Activated CD4-positive, alpha-beta T cell treated with anti-CD3 and anti-CD28 coated beads, Interleukin-2, amount 10 ng/mL, durations not matched to agents 24 days and 14 days (primary cell): ENCODE measurements at regions of chr7 and their contacts with region 1.

Region 1: DNA sequence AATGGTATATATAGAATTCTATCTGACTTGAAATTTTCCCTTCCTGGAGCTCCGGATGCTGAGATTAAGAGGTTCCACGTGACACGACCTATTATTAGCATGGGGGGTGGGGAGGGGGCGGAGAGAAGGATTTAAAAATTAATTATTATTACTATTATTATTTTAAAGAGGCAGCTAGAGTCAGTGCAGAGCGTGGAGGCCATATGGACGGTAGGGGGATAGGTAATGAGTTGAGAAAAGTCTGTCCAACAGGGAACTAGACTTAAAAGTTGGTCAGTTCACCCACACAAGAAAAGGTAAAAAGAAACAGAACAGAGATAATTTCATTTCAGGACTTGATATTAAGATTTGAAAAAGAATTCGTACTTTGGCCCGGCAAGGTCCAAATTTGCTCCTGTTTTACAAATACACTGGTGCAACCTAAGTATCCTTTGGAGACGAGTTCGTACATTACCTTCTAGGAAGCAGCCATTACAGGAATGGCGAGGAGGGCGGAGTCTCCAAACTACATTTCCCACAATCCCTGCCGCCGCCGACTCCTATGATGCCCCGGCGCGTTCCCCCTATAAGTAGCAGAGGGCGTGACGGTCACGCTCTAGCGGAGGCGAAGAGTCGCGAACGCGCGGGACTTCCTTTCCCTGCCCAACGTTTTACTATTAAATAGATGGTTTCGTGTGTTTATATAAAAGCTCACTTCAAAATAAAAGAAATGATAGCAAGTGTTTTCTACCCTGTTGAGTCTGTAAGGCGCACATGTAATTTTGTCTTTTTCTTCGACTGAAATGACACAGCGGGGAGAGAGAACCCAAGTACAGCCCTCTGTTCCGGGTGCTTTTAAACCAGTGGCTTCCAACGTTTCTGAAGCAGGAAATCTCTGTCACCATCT is at the start of gene SMIM30:
- DNase-seq: peak; percentile 96
- H3K4me3 Mint-ChIP-seq: peak within 1 kb of the TSS; percentile 93
- H3K27ac Mint-ChIP-seq: peak within 1 kb of the TSS; percentile 91
- H3K4me1 Mint-ChIP-seq: peaks cover 21% of the 10 kb centered on the region
- H3K27me3 Mint-ChIP-seq: no peaks in the 10 kb centered on the region
- total RNA-seq, gene SMIM30: 35.0 and 37.7 TPM in 2 replicates

Region 2: DNA sequence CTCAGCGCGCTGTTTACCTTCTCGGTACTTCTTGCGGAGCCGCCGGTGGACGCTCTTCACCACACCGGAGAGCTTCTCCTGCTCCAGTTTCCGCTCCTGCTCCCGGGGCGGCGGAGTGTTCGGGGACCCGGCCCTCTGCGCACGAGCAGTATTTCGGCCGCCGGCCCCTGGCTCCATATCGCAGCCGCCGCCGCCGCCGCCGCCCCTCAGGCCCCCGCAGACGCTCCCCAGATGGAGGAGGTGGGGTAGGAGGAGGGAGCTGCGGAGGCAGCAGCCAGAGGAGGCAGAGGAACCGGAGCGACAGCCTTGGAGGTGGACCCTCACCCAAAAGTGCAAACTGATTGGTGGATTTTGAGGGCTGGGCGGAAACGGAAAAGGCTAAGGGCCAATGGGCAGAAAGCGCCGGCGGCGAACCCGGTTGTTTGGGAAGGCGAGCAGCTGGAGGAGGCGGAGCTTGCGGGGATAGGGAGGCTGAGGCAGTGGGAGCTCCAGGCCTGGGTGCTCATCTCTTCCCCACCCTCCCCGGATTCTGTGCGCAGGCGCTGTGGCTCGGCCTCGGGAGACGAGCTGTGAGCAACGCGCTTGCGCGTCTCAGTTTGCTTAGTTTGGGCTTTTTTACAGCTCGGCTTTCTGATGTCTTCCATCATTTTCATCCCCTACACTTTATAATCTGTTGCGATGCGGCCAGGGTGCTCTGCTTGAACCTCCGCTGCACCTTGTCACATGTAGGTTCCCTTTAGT is 178.6 kb before region 1 on chr7:
- intact Hi-C with region 1: loop called (anchors 1 kb)
- DNase-seq: peak; percentile 100
- H3K4me3 Mint-ChIP-seq: peak overlapping the region; percentile 95
- H3K27ac Mint-ChIP-seq: peak overlapping the region; percentile 97
- H3K4me1 Mint-ChIP-seq: peaks cover 26% of the 10 kb centered on the region
- H3K27me3 Mint-ChIP-seq: peaks cover 5% of the 10 kb centered on the region